CD4-positive, alpha-beta memory T cell (primary cell): ENCODE measurements at regions of chr2 and their contacts with region 1.

Region 1: GRCh38 chr2:239369631-239370161 is 31.1 kb downstream of the HDAC4 start:
- DNase-seq: peak; percentile 80 to 95 (median 90)
- H3K4me3 ChIP-seq: peak overlapping the region in 1 of 2 donors; percentile 48
- H3K4me3 Mint-ChIP-seq: peak overlapping the region; percentile 77 to 92 (median 84)
- H3K27ac ChIP-seq: peak overlapping the region; percentile 82
- H3K27ac Mint-ChIP-seq: peak overlapping the region in 1 of 7 donors; percentile 99
- H3K4me1 ChIP-seq: peaks cover 39% of the 10 kb centered on the region
- H3K4me1 Mint-ChIP-seq: peaks cover 7 to 15% (median 11%) of the 10 kb centered on the region in 4 donors
- H3K27me3 ChIP-seq: no peaks in the 10 kb centered on the region
- H3K27me3 Mint-ChIP-seq: no peaks in the 10 kb centered on the region

Region 2: GRCh38 chr2:239318790-239319661 is 50.7 kb before region 1 on chr2:
- CTCF ChIA-PET with region 1: interaction called, 5 read pairs
- POLR2A ChIA-PET with region 1: interaction called, 15 read pairs
- intact Hi-C with region 1: no loop called
- DNase-seq: no peak
- H3K4me3 ChIP-seq: peak overlapping the region in 1 of 2 donors; percentile 28
- H3K4me3 Mint-ChIP-seq: peak overlapping the region; percentile 73 to 93 (median 80)
- H3K27ac ChIP-seq: peak overlapping the region; percentile 49
- H3K27ac Mint-ChIP-seq: peak overlapping the region; percentile 81 to 96 (median 94)
- H3K4me1 ChIP-seq: peaks cover 44% of the 10 kb centered on the region
- H3K4me1 Mint-ChIP-seq: peaks cover 42 to 78% (median 55%) of the 10 kb centered on the region in 4 donors
- H3K27me3 ChIP-seq: no peaks in the 10 kb centered on the region
- H3K27me3 Mint-ChIP-seq: no peaks in the 10 kb centered on the region

Region 3: DNA sequence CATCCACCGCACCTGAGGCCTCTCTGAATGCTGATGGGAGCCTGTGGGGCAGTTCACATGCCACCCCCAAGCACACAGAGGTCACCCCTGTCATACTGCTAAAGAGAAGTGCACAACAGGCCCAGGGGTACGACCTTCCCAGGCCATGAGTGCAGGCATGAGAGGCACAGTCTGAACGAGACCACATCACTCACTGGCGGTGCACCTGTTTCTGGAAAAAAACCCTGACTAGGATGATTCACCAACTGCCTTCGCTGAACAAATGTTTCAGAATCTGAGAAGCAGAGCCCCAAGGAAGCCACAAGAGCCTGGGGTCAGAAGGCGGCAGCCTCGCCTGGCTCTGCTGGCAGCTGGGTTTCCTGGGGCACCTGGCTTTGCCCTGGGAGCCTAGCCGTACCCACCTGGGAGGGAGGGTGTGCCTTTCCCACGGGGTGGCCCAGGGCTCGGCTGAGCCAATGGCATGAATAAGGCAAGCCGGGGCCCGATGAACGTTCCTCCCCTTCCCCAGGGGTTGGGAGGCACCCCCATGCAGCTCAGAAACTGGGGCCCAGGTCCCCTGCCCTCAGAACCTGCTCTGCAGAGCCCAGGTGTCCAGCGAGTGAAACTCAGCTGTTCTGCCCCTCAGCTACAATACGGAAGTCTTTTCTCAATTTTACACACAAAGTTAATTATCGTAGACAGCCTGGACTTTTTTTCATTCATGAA is 42.7 kb before region 1 on chr2:
- CTCF ChIA-PET with region 1: interaction called, 5 read pairs
- POLR2A ChIA-PET with region 1: interaction called, 15 read pairs
- intact Hi-C with region 1: loop called (anchors 2 kb)
- DNase-seq: peak; percentile 65 to 89 (median 70)
- H3K4me3 ChIP-seq: no peak overlapping the region
- H3K4me3 Mint-ChIP-seq: peak overlapping the region in 7 of 8 donors; percentile 46 to 76 (median 59)
- H3K27ac ChIP-seq: peak overlapping the region; percentile 46
- H3K27ac Mint-ChIP-seq: peak overlapping the region; percentile 89 to 96 (median 95)
- H3K4me1 ChIP-seq: peaks cover 61% of the 10 kb centered on the region
- H3K4me1 Mint-ChIP-seq: peaks cover 43 to 79% (median 59%) of the 10 kb centered on the region in 4 donors
- H3K27me3 ChIP-seq: no peaks in the 10 kb centered on the region
- H3K27me3 Mint-ChIP-seq: no peaks in the 10 kb centered on the region

Region 4: GRCh38 chr2:239380831-239381708 is 11.4 kb after region 1 on chr2:
- CTCF ChIA-PET with region 1: interaction called, 4 read pairs
- POLR2A ChIA-PET with region 1: interaction called, 32 read pairs
- intact Hi-C with region 1: no loop called
- DNase-seq: peak; percentile 68 to 87 (median 77)
- H3K4me3 ChIP-seq: peak overlapping the region; percentile 39 to 49
- H3K4me3 Mint-ChIP-seq: peak overlapping the region; percentile 83 to 94 (median 87)
- H3K27ac ChIP-seq: peak overlapping the region; percentile 62
- H3K27ac Mint-ChIP-seq: peak overlapping the region; percentile 90 to 99 (median 96)
- H3K4me1 ChIP-seq: peaks cover 21% of the 10 kb centered on the region
- H3K4me1 Mint-ChIP-seq: peaks cover 17 to 31% (median 19%) of the 10 kb centered on the region in 4 donors
- H3K27me3 ChIP-seq: no peaks in the 10 kb centered on the region
- H3K27me3 Mint-ChIP-seq: no peaks in the 10 kb centered on the region

Region 5: GRCh38 chr2:239706367-239706766 is 336.7 kb after region 1 on chr2:
- CTCF ChIA-PET with region 1: no interaction called
- POLR2A ChIA-PET with region 1: no interaction called
- intact Hi-C with region 1: no loop called
- DNase-seq: no peak
- H3K4me3 ChIP-seq: no peak overlapping the region
- H3K4me3 Mint-ChIP-seq: no peak overlapping the region
- H3K27ac ChIP-seq: no peak overlapping the region
- H3K27ac Mint-ChIP-seq: no peak overlapping the region
- H3K4me1 ChIP-seq: no peaks in the 10 kb centered on the region
- H3K4me1 Mint-ChIP-seq: no peaks in the 10 kb centered on the region
- H3K27me3 ChIP-seq: peaks cover 5% of the 10 kb centered on the region
- H3K27me3 Mint-ChIP-seq: peaks cover 16 to 21% of the 10 kb centered on the region in 2 donors

Region 6: GRCh38 chr2:240259201-240259923 is 889.7 kb after region 1 on chr2:
- CTCF ChIA-PET with region 1: no interaction called
- POLR2A ChIA-PET with region 1: no interaction called
- intact Hi-C with region 1: no loop called
- DNase-seq: no peak
- H3K4me3 ChIP-seq: no peak overlapping the region
- H3K4me3 Mint-ChIP-seq: no peak overlapping the region
- H3K27ac ChIP-seq: no peak overlapping the region
- H3K27ac Mint-ChIP-seq: no peak overlapping the region
- H3K4me1 ChIP-seq: no peaks in the 10 kb centered on the region
- H3K4me1 Mint-ChIP-seq: no peaks in the 10 kb centered on the region
- H3K27me3 ChIP-seq: no peaks in the 10 kb centered on the region
- H3K27me3 Mint-ChIP-seq: peaks cover 2 to 8% of the 10 kb centered on the region in 2 donors